Aorta (tissue), 5 donors: ENCODE measurements at regions of chr3 and their contacts with region 1.

Region 1: GRCh38 chr3:158845765-158846350 is 44.0 kb downstream of the MFSD1 start:
- DNase-seq: no peak
- ATAC-seq: no peak
- H3K4me3 ChIP-seq: no peak overlapping the region
- H3K27ac ChIP-seq: no peak overlapping the region
- H3K4me1 ChIP-seq: no peaks in the 10 kb centered on the region
- H3K27me3 ChIP-seq: no peaks in the 10 kb centered on the region

Region 2: GRCh38 chr3:158602227-158602626 is 243.6 kb before region 1 on chr3:
- intact Hi-C with region 1: no loop called
- DNase-seq: no peak
- ATAC-seq: no peak
- H3K4me3 ChIP-seq: no peak overlapping the region
- H3K27ac ChIP-seq: no peak overlapping the region
- H3K4me1 ChIP-seq: no peaks in the 10 kb centered on the region
- H3K27me3 ChIP-seq: no peaks in the 10 kb centered on the region

Region 3: GRCh38 chr3:159260049-159260662 is 414.3 kb after region 1 on chr3:
- intact Hi-C with region 1: loop called (anchors 2 to 5 kb)
- DNase-seq: no peak
- ATAC-seq: no peak
- H3K4me3 ChIP-seq: no peak overlapping the region
- H3K27ac ChIP-seq: no peak overlapping the region
- H3K4me1 ChIP-seq: no peaks in the 10 kb centered on the region
- H3K27me3 ChIP-seq: no peaks in the 10 kb centered on the region